Activated T-helper 1 cell treated with anti-CD3 and anti-CD28 coated beads, Interleukin-12 subunit alpha, Interleukin-12 subunit beta, Interleukin-2, Interleukin-4 antibody, amounts not matched to agents 30 ng/mL and 10 ng/mL and 1 ng/mL, durations not matched to agents 14 hours and 24 hours and 36 hours (primary cell): ENCODE measurements at regions of chr3 and their contacts with region 1.

Region 1: DNA sequence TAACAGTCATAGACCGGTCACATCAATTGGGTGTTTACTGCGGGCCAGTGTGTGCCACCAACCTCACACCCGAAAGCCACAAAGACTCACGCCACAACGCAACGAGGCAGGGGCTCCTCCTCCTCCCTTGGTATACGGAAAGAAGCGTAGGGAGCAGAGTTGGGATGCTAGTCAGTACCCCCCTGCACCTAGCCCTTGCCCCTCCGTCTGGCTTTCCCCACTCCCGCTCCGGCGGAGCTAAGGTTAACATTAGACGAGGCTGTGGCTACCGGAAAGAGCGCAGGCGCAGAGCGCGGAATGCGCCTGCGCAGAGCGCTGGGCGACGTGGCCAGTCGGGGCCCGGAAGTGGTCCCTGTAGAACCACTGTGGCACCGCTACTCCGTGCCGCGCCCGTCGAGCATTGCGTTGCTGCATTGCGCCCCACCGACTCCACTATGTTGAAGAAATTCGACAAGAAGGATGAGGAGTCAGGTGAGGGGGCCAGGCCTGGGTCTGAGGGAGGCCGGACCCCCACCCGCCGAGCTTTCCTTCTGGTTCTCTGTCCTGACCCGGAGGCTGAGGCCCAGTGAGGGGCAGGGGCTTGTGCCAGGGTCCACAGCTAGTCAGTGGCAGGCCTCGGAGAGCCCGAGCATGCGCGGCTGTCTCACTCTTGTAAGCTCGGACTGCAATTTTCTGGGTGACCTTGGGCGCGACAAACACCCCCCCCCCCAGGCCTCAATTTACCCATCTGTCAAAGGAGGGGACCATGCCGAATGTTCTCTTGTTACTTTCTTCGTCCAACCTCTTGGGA is at the start of gene COPG1:
- DNase-seq: peak; percentile 88
- H3K4me3 Mint-ChIP-seq: peak within 1 kb of the TSS; percentile 98
- H3K27ac Mint-ChIP-seq: peak within 1 kb of the TSS; percentile 98
- H3K4me1 Mint-ChIP-seq: peaks cover 61% of the 10 kb centered on the region
- H3K27me3 Mint-ChIP-seq: no peaks in the 10 kb centered on the region
- total RNA-seq, gene COPG1: 157 and 160 TPM in 2 replicates

Region 2: GRCh38 chr3:128969993-128970739 is 279.3 kb before region 1 on chr3:
- intact Hi-C with region 1: loop called (anchors 1 kb)
- DNase-seq: peak; percentile 52
- H3K4me3 Mint-ChIP-seq: no peak overlapping the region
- H3K27ac Mint-ChIP-seq: no peak overlapping the region
- H3K4me1 Mint-ChIP-seq: peaks cover 10% of the 10 kb centered on the region
- H3K27me3 Mint-ChIP-seq: peaks cover 9% of the 10 kb centered on the region

Region 3: DNA sequence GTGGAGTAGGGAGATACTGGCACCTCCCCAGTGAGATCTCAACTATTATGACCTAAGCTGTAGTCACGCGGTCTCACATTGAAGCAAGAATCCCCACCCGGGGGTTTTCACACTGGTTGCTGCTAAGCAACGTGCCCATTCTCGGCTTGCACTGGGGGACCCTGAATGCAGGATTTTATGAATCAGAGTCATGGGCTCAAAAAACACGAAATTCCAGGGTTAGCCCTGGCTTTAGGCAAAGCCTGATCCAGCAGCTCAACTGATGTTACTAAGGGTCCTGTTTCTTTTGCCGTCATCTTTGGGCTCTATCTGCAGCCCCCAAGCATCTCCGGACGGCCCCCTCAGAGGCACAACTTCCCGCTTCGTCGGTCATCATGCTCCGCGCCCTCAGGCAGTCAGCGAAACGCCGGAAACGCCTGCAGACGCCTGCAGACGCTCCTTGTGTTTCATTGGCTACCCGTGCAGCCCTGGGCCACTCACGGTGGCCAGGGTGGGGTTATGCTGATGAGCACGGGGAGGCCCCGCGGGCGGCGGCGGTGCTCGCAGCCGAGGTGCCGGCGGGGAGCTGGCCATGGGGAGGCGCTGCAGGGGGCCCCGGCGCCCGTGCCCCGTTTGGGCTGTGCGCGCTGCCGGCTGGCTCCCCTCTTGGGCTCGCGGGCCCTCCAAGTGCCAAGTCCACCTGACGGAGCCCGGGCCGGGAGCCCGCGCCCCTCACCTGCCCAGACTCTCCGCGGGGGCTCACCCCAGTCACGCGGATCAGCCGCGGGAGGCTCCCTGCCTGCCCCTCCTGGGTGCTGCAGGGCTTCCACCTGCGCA is 222.5 kb before region 1 on chr3:
- intact Hi-C with region 1: loop called (anchors 1 kb)
- DNase-seq: peak; percentile 93
- H3K4me3 Mint-ChIP-seq: peak overlapping the region; percentile 80
- H3K27ac Mint-ChIP-seq: peak overlapping the region; percentile 87
- H3K4me1 Mint-ChIP-seq: peaks cover 24% of the 10 kb centered on the region
- H3K27me3 Mint-ChIP-seq: peaks cover 13% of the 10 kb centered on the region

Region 4: DNA sequence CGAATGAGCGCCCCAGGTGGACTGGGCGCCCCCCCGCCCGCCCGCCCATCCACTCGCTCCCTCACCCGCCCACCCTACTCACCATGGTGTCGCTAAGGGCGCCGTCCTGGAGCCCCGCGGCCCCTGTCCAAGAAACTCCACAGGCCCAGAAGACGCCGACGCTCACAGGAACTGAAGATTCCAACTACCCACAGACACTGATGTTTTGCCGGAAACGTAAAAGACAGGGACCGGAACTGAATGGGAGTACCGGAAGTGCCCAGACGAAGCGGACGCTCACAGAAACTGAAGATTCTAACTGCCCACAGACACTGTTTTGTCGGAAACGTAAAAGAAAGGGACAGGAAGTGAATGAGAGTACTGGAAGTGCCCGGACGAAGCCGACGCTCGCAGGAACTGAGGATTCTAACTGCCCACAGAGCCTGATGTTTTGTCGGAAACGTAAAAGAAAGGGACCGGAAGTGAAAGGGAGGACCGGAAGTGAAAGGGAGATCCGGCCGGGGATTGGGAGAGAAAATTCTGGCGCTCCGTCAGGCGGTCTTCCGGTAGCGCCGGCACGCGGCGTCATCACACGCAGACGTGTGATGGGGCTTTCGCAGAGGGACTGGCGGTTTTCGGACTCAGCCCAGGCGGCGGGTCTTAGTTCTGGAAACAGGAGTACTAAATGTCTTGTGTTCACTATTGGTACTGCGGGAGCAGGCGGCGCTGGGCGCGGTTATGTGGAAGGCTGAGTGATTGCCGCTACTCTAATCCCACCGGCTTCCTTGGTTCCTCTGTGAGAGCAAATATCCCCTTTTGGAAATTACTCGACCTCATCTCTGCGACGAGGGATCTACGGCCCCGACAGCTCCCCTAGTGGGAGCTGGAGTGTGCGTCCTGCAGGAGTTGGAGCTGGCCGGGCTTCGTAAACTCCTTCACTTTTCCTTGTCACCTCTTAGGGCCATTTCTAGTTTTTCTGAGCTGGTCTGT is 88.3 kb before region 1 on chr3 and contains the start of gene ISY1:
- intact Hi-C with region 1: loop called (anchors 1 kb)
- DNase-seq: peak; percentile 88
- H3K4me3 Mint-ChIP-seq: peak within 1 kb of the TSS; percentile 97
- H3K27ac Mint-ChIP-seq: peak within 1 kb of the TSS; percentile 99
- H3K4me1 Mint-ChIP-seq: peaks cover 34% of the 10 kb centered on the region
- H3K27me3 Mint-ChIP-seq: no peaks in the 10 kb centered on the region
- total RNA-seq, gene ISY1: 72.3 and 75.4 TPM in 2 replicates

Region 5: DNA sequence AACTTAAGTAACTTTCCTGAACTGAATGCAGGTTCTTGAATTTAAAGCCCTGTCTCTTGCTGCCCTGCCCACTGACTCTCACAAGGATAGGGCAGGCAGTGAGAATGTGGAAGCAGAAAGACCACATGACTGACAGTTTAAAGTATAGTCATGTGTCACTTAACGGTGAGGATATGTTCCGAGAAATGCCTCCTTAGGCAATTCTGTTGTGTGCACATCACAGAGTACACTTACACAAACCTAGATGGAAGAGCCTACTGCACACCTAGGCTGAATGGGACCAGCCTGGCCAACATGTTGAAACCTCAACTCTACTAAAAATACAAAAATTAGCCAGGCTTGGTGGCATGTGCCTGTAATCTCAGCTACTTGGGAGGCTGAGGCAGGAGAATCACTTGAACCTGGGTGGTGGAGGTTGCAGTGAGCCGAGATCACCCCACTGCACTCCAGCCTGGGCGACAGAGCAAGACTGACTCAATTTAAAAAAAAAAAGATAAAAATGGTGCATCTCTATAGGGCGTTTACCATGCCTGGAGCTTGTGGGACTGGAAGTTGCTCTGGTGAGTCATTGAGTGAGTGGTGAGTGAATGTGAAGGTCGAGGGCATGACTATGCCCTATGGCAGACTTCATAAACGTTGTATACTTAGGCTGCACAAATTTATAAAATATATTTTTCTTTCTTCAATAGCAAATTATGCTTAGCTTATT is 19.0 kb before region 1 on chr3:
- intact Hi-C with region 1: loop called (anchors 2 kb)
- DNase-seq: peak; percentile 35
- H3K4me3 Mint-ChIP-seq: peak overlapping the region; percentile 57
- H3K27ac Mint-ChIP-seq: peak overlapping the region; percentile 50
- H3K4me1 Mint-ChIP-seq: peaks cover 74% of the 10 kb centered on the region
- H3K27me3 Mint-ChIP-seq: no peaks in the 10 kb centered on the region

Region 6: GRCh38 chr3:129278439-129278970 is 29.0 kb after region 1 on chr3 and contains the start of gene HMCES:
- intact Hi-C with region 1: loop called (anchors 1 kb)
- DNase-seq: peak; percentile 92
- H3K4me3 Mint-ChIP-seq: peak within 1 kb of the TSS; percentile 93
- H3K27ac Mint-ChIP-seq: peak within 1 kb of the TSS; percentile 97
- H3K4me1 Mint-ChIP-seq: peaks cover 48% of the 10 kb centered on the region
- H3K27me3 Mint-ChIP-seq: no peaks in the 10 kb centered on the region
- total RNA-seq, gene HMCES: 59.4 and 61.6 TPM in 2 replicates

Region 7: DNA sequence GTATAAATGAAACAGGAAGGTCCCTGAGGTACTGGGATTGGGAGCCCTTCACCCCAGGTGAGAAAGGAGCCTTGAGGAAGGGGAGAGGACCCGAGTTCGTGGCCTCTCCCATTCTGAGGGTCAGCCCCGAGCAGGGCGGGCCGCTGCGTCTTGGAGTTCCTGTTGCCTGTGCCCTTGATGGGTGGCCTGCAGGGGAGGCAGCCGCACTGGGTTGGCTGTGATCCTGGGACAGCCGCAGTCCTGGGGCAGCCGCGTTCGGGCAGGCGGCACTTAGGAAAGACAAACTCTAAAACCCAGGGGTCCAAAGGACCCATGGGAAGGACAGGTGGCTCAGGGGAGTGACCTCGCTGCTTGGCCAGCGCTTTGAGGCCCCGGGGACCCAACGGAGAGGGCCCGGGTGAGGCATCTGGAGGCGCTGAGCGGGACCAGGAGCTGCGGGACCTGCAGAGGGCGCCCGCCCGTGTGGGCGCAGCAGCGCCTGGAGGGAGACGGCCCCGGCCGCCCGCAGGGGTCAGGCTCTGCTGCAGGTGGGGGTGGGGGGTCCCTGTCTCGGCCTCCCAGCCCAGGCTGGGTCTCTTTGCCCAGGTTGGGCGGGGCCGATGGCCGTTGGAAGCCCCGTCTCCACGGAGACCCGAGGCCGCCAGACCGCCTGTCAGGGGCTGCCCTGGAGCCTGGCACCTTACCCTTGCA is 94.3 kb after region 1 on chr3:
- intact Hi-C with region 1: no loop called
- DNase-seq: no peak
- H3K4me3 Mint-ChIP-seq: no peak overlapping the region
- H3K27ac Mint-ChIP-seq: no peak overlapping the region
- H3K4me1 Mint-ChIP-seq: no peaks in the 10 kb centered on the region
- H3K27me3 Mint-ChIP-seq: peaks cover 28% of the 10 kb centered on the region

Region 8: DNA sequence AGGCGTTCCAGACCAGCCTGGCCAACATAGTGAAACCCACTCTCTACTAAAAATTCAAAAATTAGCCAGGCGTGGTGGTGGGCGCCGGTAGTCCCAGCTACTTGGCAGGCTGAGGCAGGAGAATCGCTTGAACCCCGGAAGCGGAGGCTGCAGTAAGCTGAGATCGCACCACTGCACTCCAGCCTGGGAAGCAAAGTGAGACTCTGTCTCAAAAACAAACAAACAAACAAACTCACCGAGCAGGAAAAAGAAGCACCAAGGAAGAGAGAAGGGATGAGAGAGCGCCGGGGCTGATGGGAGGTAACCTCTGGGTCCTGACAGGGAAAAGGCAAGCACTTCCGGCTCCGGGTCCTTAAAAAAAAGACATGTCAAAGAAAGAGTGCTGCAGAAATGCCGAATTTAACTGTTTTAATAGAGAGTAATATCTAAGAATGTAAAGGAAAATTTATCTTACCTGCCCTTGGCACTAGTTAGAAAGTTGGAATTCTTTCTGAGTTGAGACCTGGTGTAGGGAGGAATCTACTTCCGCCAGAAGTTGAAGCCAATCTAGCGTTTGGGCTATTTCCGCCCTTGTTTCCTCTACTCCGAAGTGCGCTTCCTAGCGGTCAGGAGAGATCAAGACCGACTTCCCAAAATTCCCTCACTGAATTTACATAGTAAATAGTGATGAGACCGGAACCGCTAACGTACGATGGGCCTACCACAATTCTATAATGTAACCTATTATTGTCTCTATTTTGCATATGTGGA is 149.8 kb after region 1 on chr3:
- intact Hi-C with region 1: loop called (anchors 1 kb)
- DNase-seq: peak; percentile 73
- H3K4me3 Mint-ChIP-seq: peak overlapping the region; percentile 96
- H3K27ac Mint-ChIP-seq: peak overlapping the region; percentile 94
- H3K4me1 Mint-ChIP-seq: peaks cover 23% of the 10 kb centered on the region
- H3K27me3 Mint-ChIP-seq: no peaks in the 10 kb centered on the region